Activated B cell treated with CpG ODN at 0.5 μM for 24 hours (primary cell): ENCODE measurements at regions of chr5 and their contacts with region 1.

Region 1: DNA sequence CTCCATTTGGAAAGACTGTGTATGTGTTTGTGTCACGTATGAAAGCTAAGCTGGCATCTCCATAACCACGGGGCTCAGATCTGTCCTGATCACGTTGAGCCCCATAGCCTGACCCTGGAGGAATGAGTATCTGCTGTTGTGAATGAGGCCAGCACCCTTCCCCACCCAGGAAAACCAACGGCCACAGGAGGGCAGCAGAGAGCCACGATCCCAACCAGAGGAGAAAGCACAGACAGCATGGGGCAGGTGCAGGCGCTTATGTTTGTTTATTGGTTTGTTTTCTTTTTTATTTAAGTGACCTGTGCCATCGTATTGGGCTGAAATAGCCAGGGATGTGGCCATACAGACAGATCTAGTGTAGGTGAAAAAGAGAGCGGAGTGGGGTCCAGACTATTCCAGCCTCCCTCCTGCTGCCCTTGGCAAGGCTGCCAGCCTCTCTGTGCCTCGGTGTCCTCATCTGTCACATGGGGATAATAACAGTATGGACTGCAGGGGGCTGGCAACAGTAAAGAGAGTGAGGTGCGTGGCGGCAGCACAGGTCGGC is 12.0 kb downstream of the OR2V2 start:
- DNase-seq: peak; percentile 87
- ATAC-seq: peak; percentile 74
- H3K4me3 Mint-ChIP-seq: peak overlapping the region; percentile 75
- H3K27ac Mint-ChIP-seq: peak overlapping the region; percentile 81
- H3K4me1 Mint-ChIP-seq: peaks cover 29% of the 10 kb centered on the region
- H3K27me3 Mint-ChIP-seq: peaks cover 10% of the 10 kb centered on the region
- CTCF ChIP-seq: no peak

Region 2: DNA sequence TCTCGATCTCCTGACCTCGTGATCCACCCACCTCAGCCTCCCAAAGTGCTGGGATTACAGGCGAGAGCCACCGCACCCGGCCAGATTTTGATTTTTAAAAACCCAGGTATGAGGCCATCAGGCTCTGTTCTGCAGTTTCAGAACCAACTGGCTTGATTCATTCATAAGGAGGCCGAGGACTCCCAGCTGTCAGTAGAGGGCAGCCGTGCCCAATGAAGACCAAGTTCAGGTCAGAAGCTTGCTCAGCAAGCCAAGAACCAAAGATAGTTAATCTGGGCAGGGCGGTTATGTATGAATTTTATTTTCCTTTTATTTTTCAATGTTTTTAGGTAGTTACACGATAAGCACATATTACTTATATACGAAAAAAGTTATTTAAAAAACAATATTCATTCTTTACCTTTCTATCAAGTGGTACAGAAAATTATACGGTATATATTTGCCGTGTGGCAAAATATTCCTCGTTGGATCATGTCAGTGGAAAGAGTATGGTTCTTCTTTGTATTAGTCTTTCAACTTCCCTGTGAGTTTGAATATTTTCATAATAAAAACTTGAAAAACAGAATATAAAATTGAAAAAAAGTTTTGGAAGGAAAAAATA is 374.8 kb before region 1 on chr5:
- CTCF ChIA-PET with region 1: interaction called, 3 read pairs
- POLR2A ChIA-PET with region 1: no interaction called
- intact Hi-C with region 1: loop called (anchors 1 kb)
- DNase-seq: peak; percentile 58
- ATAC-seq: peak; percentile 89
- H3K4me3 Mint-ChIP-seq: no peak overlapping the region
- H3K27ac Mint-ChIP-seq: no peak overlapping the region
- H3K4me1 Mint-ChIP-seq: no peaks in the 10 kb centered on the region
- H3K27me3 Mint-ChIP-seq: no peaks in the 10 kb centered on the region
- CTCF ChIP-seq: peak; percentile 36

Region 3: DNA sequence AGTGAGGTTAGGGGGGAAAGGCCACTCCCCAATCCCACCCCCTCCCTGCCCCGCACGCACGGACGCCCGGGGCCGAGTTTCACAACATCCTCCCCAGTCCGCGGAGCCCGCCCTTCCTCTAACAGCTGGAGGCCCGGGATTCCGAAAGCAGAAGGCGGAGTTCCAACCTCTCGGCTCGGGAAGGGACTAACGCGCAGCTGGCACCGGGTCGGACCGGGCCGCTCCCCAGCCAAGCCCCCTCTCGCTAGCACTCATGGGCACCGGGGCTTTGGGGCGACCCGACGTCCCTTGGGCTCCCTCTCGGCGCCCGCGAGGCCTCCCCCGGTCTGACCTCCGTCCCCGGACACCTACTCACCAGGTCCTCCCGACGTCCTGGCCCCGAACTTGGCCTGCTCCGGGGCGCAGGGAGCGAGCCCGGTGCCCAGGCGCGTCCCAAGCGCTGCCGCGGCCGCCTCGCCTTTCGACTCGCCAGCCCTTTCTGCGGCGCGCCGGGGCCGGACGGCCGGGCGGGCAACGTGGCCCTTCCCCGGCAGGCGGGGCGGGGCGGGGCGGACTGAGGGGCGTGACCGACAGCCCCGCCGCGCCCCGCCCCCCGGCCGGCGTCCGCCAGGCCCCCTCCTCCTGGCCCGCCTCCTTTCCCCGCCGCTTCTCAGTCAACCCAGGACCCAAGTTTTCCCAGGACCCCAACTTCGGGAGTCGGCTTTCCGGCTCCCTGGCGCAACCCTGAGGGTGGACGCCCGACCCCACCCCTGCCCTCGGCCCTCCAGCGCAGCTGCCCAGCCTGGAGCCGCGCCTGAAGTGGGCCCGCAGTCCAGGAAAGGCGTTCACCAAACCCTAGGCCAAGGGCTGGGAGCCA is 356.8 kb before region 1 on chr5 and contains the start of gene MGAT1:
- CTCF ChIA-PET with region 1: no interaction called
- POLR2A ChIA-PET with region 1: interaction called, 3 read pairs
- intact Hi-C with region 1: loop called (anchors 5 kb)
- DNase-seq: peak; percentile 84
- ATAC-seq: peak; percentile 60
- H3K4me3 Mint-ChIP-seq: peak within 1 kb of the TSS; percentile 91
- H3K27ac Mint-ChIP-seq: peak within 1 kb of the TSS; percentile 91
- H3K4me1 Mint-ChIP-seq: peaks cover 84% of the 10 kb centered on the region
- H3K27me3 Mint-ChIP-seq: no peaks in the 10 kb centered on the region
- CTCF ChIP-seq: no peak
- total RNA-seq, gene MGAT1: 66.9 and 74.5 TPM in 2 replicates

Region 4: GRCh38 chr5:180868960-180869359 is 290.4 kb before region 1 on chr5:
- CTCF ChIA-PET with region 1: no interaction called
- POLR2A ChIA-PET with region 1: no interaction called
- intact Hi-C with region 1: loop called (anchors 1 kb)
- DNase-seq: peak; percentile 45
- ATAC-seq: peak; percentile 54
- H3K4me3 Mint-ChIP-seq: no peak overlapping the region
- H3K27ac Mint-ChIP-seq: no peak overlapping the region
- H3K4me1 Mint-ChIP-seq: peaks cover 13% of the 10 kb centered on the region
- H3K27me3 Mint-ChIP-seq: peaks cover 3% of the 10 kb centered on the region
- CTCF ChIP-seq: peak; percentile 20

Region 5: GRCh38 chr5:180975338-180975737 is 184.0 kb before region 1 on chr5:
- CTCF ChIA-PET with region 1: no interaction called
- POLR2A ChIA-PET with region 1: no interaction called
- intact Hi-C with region 1: loop called (anchors 5 kb)
- DNase-seq: peak; percentile 41
- ATAC-seq: peak; percentile 99
- H3K4me3 Mint-ChIP-seq: peak overlapping the region; percentile 47
- H3K27ac Mint-ChIP-seq: peak overlapping the region; percentile 81
- H3K4me1 Mint-ChIP-seq: peaks cover 40% of the 10 kb centered on the region
- H3K27me3 Mint-ChIP-seq: no peaks in the 10 kb centered on the region
- CTCF ChIP-seq: no peak

Region 6: GRCh38 chr5:181052672-181053487 is 106.5 kb before region 1 on chr5:
- CTCF ChIA-PET with region 1: no interaction called
- POLR2A ChIA-PET with region 1: no interaction called
- intact Hi-C with region 1: loop called (anchors 5 kb)
- DNase-seq: peak; percentile 42
- ATAC-seq: peak; percentile 35
- H3K4me3 Mint-ChIP-seq: peak overlapping the region; percentile 85
- H3K27ac Mint-ChIP-seq: peak overlapping the region; percentile 70
- H3K4me1 Mint-ChIP-seq: peaks cover 46% of the 10 kb centered on the region
- H3K27me3 Mint-ChIP-seq: peaks cover 52% of the 10 kb centered on the region
- CTCF ChIP-seq: no peak

Region 7: GRCh38 chr5:181181650-181182565 is 22.6 kb after region 1 on chr5:
- CTCF ChIA-PET with region 1: interaction called, 3 read pairs
- POLR2A ChIA-PET with region 1: no interaction called
- intact Hi-C with region 1: loop called (anchors 1 kb)
- DNase-seq: no peak
- ATAC-seq: peak; percentile 70
- H3K4me3 Mint-ChIP-seq: no peak overlapping the region
- H3K27ac Mint-ChIP-seq: no peak overlapping the region
- H3K4me1 Mint-ChIP-seq: peaks cover 31% of the 10 kb centered on the region
- H3K27me3 Mint-ChIP-seq: no peaks in the 10 kb centered on the region
- CTCF ChIP-seq: peak; percentile 41